ENCODE measurements at regions of chr1 and their contacts with region 1.

Region 1: GRCh38 chr1:156689035-156689952 is 12.1 kb upstream of the NES start:
- DNase-seq: peak; percentile 68 to 88
- ATAC-seq: peak; percentile 91 to 99 (median 98)
- H3K4me3 ChIP-seq: no peak overlapping the region
- H3K4me3 Mint-ChIP-seq: no peak overlapping the region
- H3K27ac ChIP-seq: no peak overlapping the region
- H3K27ac Mint-ChIP-seq: peak overlapping the region in 1 of 2 donors; percentile 21
- H3K4me1 ChIP-seq: peaks cover 8% of the 10 kb centered on the region
- H3K4me1 Mint-ChIP-seq: peaks cover 7 to 21% of the 10 kb centered on the region in 2 donors
- H3K27me3 ChIP-seq: peaks cover 50% of the 10 kb centered on the region
- H3K27me3 Mint-ChIP-seq: peaks cover 33 to 38% of the 10 kb centered on the region in 2 donors
- CTCF ChIP-seq: peak; percentile 87

Region 2: DNA sequence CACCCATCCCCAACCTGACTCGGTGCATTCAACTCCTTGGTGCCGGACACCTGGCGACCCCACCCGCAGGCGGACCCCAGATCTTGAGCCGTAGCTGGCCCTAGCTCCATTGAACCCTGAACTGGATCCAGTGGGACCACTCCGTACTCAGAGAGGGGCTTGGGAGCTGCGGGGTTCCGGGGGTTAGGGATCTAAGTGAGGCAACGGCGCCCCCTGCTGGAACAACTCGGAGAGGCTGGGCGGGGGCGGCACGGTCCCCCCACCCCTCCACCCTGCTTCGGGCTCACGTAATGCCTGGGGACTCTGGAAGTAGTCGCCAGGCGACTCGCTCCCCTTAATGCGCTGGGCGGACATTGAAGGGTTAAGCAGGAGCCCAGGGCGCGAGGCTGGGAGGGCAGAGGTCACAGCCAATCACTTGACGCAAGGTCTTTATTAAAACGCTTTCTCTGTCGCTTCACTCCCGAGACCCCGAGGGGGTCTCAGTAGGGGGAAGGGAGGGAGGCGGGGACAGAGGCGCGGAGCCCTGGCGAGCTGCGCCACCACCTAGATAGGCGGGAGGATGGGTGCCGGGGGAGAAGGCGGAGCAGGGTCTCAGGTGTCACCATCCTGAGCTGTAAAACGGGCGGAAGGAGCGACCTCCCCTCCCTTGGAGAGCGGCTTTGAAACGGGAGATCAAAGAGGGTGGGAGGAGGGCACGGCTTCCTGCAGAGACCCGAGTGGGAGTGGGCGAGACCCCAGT is 16.8 kb after region 1 on chr1:
- intact Hi-C with region 1: loop called (anchors 2 kb)
- DNase-seq: peak; percentile 58 to 84
- ATAC-seq: peak; percentile 57 to 65 (median 63)
- H3K4me3 ChIP-seq: peak overlapping the region; percentile 53
- H3K4me3 Mint-ChIP-seq: peak overlapping the region; percentile 86
- H3K27ac ChIP-seq: no peak overlapping the region
- H3K27ac Mint-ChIP-seq: peak overlapping the region in 1 of 2 donors; percentile 84
- H3K4me1 ChIP-seq: peaks cover 31% of the 10 kb centered on the region
- H3K4me1 Mint-ChIP-seq: peaks cover 18 to 33% of the 10 kb centered on the region in 2 donors
- H3K27me3 ChIP-seq: peaks cover 32% of the 10 kb centered on the region
- H3K27me3 Mint-ChIP-seq: peaks cover 16 to 26% of the 10 kb centered on the region in 2 donors
- CTCF ChIP-seq: peak; percentile 75

Region 3: GRCh38 chr1:156889802-156890585 is 200.7 kb after region 1 on chr1:
- intact Hi-C with region 1: loop called (anchors 1 kb)
- DNase-seq: peak; percentile 44 to 73
- ATAC-seq: peak; percentile 38 to 53 (median 45)
- H3K4me3 ChIP-seq: no peak overlapping the region
- H3K4me3 Mint-ChIP-seq: peak overlapping the region; percentile 29
- H3K27ac ChIP-seq: no peak overlapping the region
- H3K27ac Mint-ChIP-seq: no peak overlapping the region
- H3K4me1 ChIP-seq: peaks cover 20% of the 10 kb centered on the region
- H3K4me1 Mint-ChIP-seq: peaks cover 8 to 21% of the 10 kb centered on the region in 2 donors
- H3K27me3 ChIP-seq: peaks cover 29% of the 10 kb centered on the region
- H3K27me3 Mint-ChIP-seq: peaks cover 30 to 46% of the 10 kb centered on the region in 2 donors
- CTCF ChIP-seq: peak; percentile 78